Naive thymus-derived CD4-positive, alpha-beta T cell (primary cell): ENCODE measurements at regions of chr3 and their contacts with region 1.

Region 1: DNA sequence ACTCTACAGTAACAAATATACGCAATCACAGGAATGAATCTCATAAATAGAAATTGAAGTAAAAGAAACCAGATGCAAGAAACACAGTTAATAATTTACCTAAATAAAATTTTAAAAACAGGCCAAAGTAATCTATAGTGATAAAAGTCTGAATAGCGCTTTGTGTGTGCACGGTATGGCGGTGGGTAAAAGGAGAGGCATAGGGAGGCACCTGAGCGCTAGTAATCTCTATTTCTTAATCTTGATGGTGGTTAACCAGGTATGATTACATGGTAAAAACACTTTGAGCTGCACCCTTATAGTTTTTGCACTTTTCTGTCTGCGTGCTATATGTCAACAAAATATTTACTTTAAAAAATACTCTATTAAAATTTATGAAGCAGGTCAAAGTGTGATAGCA is 198.1 kb upstream of the SATB1 start:
- DNase-seq: no peak
- ATAC-seq: no peak
- H3K4me3 ChIP-seq: no peak overlapping the region
- H3K4me3 Mint-ChIP-seq: no peak overlapping the region
- H3K27ac ChIP-seq: no peak overlapping the region
- H3K27ac Mint-ChIP-seq: no peak overlapping the region
- H3K4me1 ChIP-seq: peaks cover 0 to 6% of the 10 kb centered on the region in 2 donors
- H3K4me1 Mint-ChIP-seq: peaks cover 4 to 18% (median 15%) of the 10 kb centered on the region in 7 donors
- H3K27me3 ChIP-seq: no peaks in the 10 kb centered on the region
- H3K27me3 Mint-ChIP-seq: no peaks in the 10 kb centered on the region

Region 2: DNA sequence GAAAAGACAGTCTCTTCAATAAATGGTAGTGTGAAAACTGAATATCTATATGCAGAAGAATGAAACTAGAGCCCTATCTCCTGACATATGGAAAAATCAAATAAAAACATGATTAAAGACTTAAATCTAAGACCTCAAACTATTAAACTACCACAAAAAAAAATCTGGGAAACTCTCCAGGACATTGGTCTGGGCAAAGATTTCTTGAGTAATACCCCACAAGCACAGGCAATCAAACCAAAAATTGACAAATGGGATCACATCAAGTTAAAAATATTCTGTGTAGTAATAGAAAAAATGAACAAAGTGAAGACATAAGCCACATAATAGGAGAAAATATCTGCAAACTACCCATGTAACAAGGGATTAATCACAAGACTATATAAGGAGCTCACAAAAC is 1167.2 kb before region 1 on chr3:
- CTCF ChIA-PET with region 1: no interaction called
- POLR2A ChIA-PET with region 1: no interaction called
- intact Hi-C with region 1: no loop called
- DNase-seq: no peak
- ATAC-seq: no peak
- H3K4me3 ChIP-seq: no peak overlapping the region
- H3K4me3 Mint-ChIP-seq: no peak overlapping the region
- H3K27ac ChIP-seq: no peak overlapping the region
- H3K27ac Mint-ChIP-seq: no peak overlapping the region
- H3K4me1 ChIP-seq: no peaks in the 10 kb centered on the region
- H3K4me1 Mint-ChIP-seq: peaks cover 0 to 4% (median 0%) of the 10 kb centered on the region in 7 donors
- H3K27me3 ChIP-seq: no peaks in the 10 kb centered on the region
- H3K27me3 Mint-ChIP-seq: no peaks in the 10 kb centered on the region

Region 3: GRCh38 chr3:18586076-18586475 is 37.1 kb before region 1 on chr3:
- CTCF ChIA-PET with region 1: interaction called, 3 read pairs
- POLR2A ChIA-PET with region 1: no interaction called
- intact Hi-C with region 1: loop called in 1 of 2 experiments (anchors 5 kb)
- DNase-seq: no peak
- ATAC-seq: no peak
- H3K4me3 ChIP-seq: no peak overlapping the region
- H3K4me3 Mint-ChIP-seq: no peak overlapping the region
- H3K27ac ChIP-seq: no peak overlapping the region
- H3K27ac Mint-ChIP-seq: no peak overlapping the region
- H3K4me1 ChIP-seq: no peaks in the 10 kb centered on the region
- H3K4me1 Mint-ChIP-seq: peaks cover 4 to 19% (median 9%) of the 10 kb centered on the region in 7 donors
- H3K27me3 ChIP-seq: no peaks in the 10 kb centered on the region
- H3K27me3 Mint-ChIP-seq: no peaks in the 10 kb centered on the region

Region 4: GRCh38 chr3:19331931-19332330 is 708.7 kb after region 1 on chr3:
- CTCF ChIA-PET with region 1: no interaction called
- POLR2A ChIA-PET with region 1: no interaction called
- intact Hi-C with region 1: no loop called
- DNase-seq: no peak
- ATAC-seq: no peak
- H3K4me3 ChIP-seq: no peak overlapping the region
- H3K4me3 Mint-ChIP-seq: no peak overlapping the region
- H3K27ac ChIP-seq: no peak overlapping the region
- H3K27ac Mint-ChIP-seq: no peak overlapping the region
- H3K4me1 ChIP-seq: no peaks in the 10 kb centered on the region
- H3K4me1 Mint-ChIP-seq: no peaks in the 10 kb centered on the region
- H3K27me3 ChIP-seq: no peaks in the 10 kb centered on the region
- H3K27me3 Mint-ChIP-seq: no peaks in the 10 kb centered on the region